Activated CD4-positive, alpha-beta T cell treated with anti-CD3 and anti-CD28 coated beads for 36 hours (primary cell): ENCODE measurements at regions of chr10 and their contacts with region 1.

Region 1: DNA sequence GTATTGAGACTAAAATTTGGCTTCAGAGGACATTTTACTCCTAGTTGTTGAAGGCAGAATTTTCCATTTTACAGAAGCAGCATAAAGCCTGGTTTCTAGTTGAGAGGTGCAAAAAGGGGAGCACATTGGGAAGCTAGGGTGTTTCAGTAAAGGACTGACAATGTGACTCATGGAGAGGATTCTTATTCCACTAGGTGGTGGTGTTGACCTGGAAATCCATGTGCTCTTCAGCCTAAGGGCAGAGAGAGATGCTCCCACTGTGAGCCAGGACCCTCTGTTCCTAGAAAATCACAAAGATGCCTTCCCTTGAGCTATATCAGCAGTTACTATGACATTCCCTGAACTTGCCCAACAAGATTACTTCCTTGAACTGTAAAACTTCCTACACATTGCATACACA is 687.8 kb downstream of the IPMK start:
- DNase-seq: no peak
- ATAC-seq: no peak
- H3K4me3 Mint-ChIP-seq: no peak overlapping the region
- H3K27ac Mint-ChIP-seq: no peak overlapping the region
- H3K4me1 Mint-ChIP-seq: no peaks in the 10 kb centered on the region
- H3K27me3 Mint-ChIP-seq: no peaks in the 10 kb centered on the region

Region 2: GRCh38 chr10:57186201-57186600 is 393.7 kb before region 1 on chr10:
- CTCF ChIA-PET with region 1: no interaction called
- POLR2A ChIA-PET with region 1: no interaction called
- intact Hi-C with region 1: no loop called
- DNase-seq: no peak
- ATAC-seq: no peak
- H3K4me3 Mint-ChIP-seq: no peak overlapping the region
- H3K27ac Mint-ChIP-seq: no peak overlapping the region
- H3K4me1 Mint-ChIP-seq: no peaks in the 10 kb centered on the region
- H3K27me3 Mint-ChIP-seq: no peaks in the 10 kb centered on the region

Region 3: DNA sequence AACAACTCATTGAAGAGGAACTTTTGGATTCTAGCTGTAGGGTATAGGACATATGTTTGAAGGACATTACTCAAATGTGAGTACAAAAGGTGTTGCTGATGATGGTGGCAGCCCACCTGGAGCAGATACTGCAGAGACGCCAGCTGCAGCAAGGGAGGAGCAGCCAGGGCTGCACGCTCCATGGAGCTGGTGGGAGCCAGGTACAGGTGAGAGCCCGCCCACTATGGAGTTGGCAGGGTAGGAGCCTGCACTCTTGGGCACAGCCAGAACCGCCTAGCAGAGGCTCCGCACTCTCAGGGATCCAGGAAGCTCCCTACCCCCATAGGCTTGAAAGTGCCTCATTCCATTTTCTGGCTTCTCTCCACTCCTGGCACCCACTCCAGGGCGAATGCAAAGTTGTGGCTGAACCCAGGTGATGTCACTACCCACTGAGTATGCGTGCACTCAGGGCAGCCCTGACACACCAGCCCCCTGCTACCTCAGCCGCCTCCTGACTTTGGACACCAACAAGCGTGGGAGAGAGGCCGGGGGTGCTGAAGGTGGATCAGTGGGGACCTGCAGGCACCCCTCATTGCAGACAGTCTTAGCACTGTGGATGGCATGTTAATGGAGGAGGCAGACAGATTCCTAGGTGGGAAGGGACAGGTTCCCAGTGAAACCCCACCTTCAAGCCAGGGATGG is 73.4 kb before region 1 on chr10:
- CTCF ChIA-PET with region 1: no interaction called
- POLR2A ChIA-PET with region 1: no interaction called
- intact Hi-C with region 1: no loop called
- DNase-seq: no peak
- ATAC-seq: no peak
- H3K4me3 Mint-ChIP-seq: no peak overlapping the region
- H3K27ac Mint-ChIP-seq: no peak overlapping the region
- H3K4me1 Mint-ChIP-seq: no peaks in the 10 kb centered on the region
- H3K27me3 Mint-ChIP-seq: no peaks in the 10 kb centered on the region

Region 4: GRCh38 chr10:57605948-57606485 is 26.1 kb after region 1 on chr10:
- CTCF ChIA-PET with region 1: no interaction called
- POLR2A ChIA-PET with region 1: no interaction called
- intact Hi-C with region 1: no loop called
- DNase-seq: no peak
- ATAC-seq: no peak
- H3K4me3 Mint-ChIP-seq: no peak overlapping the region
- H3K27ac Mint-ChIP-seq: no peak overlapping the region
- H3K4me1 Mint-ChIP-seq: no peaks in the 10 kb centered on the region
- H3K27me3 Mint-ChIP-seq: no peaks in the 10 kb centered on the region

Region 5: DNA sequence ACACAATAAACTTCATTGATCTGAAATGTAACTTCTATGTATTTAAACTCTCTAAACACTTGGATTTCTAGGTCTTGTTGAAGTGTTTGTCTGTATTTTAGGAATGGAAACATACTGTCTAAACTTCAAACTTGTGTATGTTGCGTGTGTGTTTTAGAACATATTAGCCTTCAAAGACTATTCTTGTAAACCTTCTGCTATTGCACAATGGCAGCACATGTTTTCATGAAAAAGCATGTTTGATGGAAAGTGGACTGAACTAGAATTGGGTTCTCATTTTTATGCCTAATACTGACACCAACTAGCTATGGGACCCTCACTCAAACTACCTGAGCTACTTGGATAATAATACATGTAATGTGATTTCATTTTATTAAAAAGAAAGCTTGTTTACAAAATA is 95.2 kb after region 1 on chr10:
- CTCF ChIA-PET with region 1: no interaction called
- POLR2A ChIA-PET with region 1: no interaction called
- intact Hi-C with region 1: no loop called
- DNase-seq: no peak
- ATAC-seq: no peak
- H3K4me3 Mint-ChIP-seq: no peak overlapping the region
- H3K27ac Mint-ChIP-seq: no peak overlapping the region
- H3K4me1 Mint-ChIP-seq: no peaks in the 10 kb centered on the region
- H3K27me3 Mint-ChIP-seq: no peaks in the 10 kb centered on the region

Region 6: GRCh38 chr10:58064714-58065528 is 485.0 kb after region 1 on chr10:
- CTCF ChIA-PET with region 1: interaction called, 3 read pairs
- POLR2A ChIA-PET with region 1: no interaction called
- intact Hi-C with region 1: loop called in 1 of 2 experiments (anchors 10 kb)
- DNase-seq: peak; percentile 11
- ATAC-seq: no peak
- H3K4me3 Mint-ChIP-seq: no peak overlapping the region
- H3K27ac Mint-ChIP-seq: no peak overlapping the region
- H3K4me1 Mint-ChIP-seq: peaks cover 3% of the 10 kb centered on the region
- H3K27me3 Mint-ChIP-seq: peaks cover 20% of the 10 kb centered on the region

Region 7: GRCh38 chr10:58152673-58153263 is 572.8 kb after region 1 on chr10:
- CTCF ChIA-PET with region 1: interaction called, 4 read pairs
- POLR2A ChIA-PET with region 1: no interaction called
- intact Hi-C with region 1: loop called in 1 of 2 experiments (anchors 1 kb)
- DNase-seq: peak; percentile 70
- ATAC-seq: peak; percentile 55
- H3K4me3 Mint-ChIP-seq: no peak overlapping the region
- H3K27ac Mint-ChIP-seq: no peak overlapping the region
- H3K4me1 Mint-ChIP-seq: no peaks in the 10 kb centered on the region
- H3K27me3 Mint-ChIP-seq: peaks cover 21% of the 10 kb centered on the region